Activated B cell treated with CpG ODN at 0.5 μM for 24 hours (primary cell): ENCODE measurements at regions of chr12 and their contacts with region 1.

Region 1: GRCh38 chr12:116244001-116244400 is 33.5 kb downstream of the MED13L start:
- DNase-seq: no peak
- ATAC-seq: peak; percentile 80
- H3K4me3 Mint-ChIP-seq: peak overlapping the region; percentile 47
- H3K27ac Mint-ChIP-seq: peak overlapping the region; percentile 78
- H3K4me1 Mint-ChIP-seq: peaks cover 79% of the 10 kb centered on the region
- H3K27me3 Mint-ChIP-seq: no peaks in the 10 kb centered on the region
- CTCF ChIP-seq: no peak

Region 2: DNA sequence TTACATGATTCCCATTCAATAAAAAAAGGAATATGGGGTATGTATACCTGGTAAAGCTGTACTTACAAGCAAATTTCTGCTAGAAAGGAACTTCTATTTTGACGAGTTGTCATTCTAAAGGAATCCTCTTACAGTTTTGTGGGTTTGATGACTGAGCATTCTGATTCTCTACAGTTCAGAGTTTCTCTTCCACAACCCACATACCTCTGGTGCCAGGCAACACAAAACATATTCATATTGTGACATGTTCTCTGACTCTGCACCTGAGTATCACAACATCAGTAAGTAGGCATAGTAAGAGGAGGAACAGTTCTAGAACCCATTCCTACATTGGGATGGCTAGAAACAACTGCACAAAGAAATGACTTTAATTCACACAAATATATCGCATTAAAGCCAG is 603.1 kb before region 1 on chr12:
- CTCF ChIA-PET with region 1: no interaction called
- POLR2A ChIA-PET with region 1: no interaction called
- intact Hi-C with region 1: no loop called
- DNase-seq: no peak
- ATAC-seq: no peak
- H3K4me3 Mint-ChIP-seq: no peak overlapping the region
- H3K27ac Mint-ChIP-seq: no peak overlapping the region
- H3K4me1 Mint-ChIP-seq: no peaks in the 10 kb centered on the region
- H3K27me3 Mint-ChIP-seq: no peaks in the 10 kb centered on the region
- CTCF ChIP-seq: no peak

Region 3: GRCh38 chr12:115885038-115885690 is 358.8 kb before region 1 on chr12:
- CTCF ChIA-PET with region 1: no interaction called
- POLR2A ChIA-PET with region 1: no interaction called
- intact Hi-C with region 1: no loop called
- DNase-seq: no peak
- ATAC-seq: no peak
- H3K4me3 Mint-ChIP-seq: no peak overlapping the region
- H3K27ac Mint-ChIP-seq: no peak overlapping the region
- H3K4me1 Mint-ChIP-seq: no peaks in the 10 kb centered on the region
- H3K27me3 Mint-ChIP-seq: peaks cover 29% of the 10 kb centered on the region
- CTCF ChIP-seq: no peak

Region 4: DNA sequence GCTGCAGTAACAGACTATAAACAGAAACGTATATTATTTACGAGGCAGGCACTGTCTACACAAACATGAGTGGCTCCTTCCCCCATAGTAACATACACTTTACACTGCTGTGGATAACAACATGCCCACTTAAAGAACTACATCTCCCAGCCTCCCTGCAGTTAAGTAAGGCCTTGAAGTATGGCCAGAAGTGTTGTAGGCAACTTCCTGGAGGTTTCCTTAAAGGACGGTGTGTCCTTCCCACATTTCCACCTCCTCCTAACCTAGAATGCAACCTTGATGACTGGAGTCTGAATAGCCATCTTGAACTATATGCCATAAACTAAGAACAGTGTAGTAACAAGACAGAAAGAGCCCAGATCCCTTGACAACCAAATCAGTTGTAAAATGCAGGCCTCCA is 13.2 kb after region 1 on chr12:
- CTCF ChIA-PET with region 1: no interaction called
- POLR2A ChIA-PET with region 1: interaction called, 15 read pairs
- intact Hi-C with region 1: loop called (anchors 1 kb)
- DNase-seq: no peak
- ATAC-seq: no peak
- H3K4me3 Mint-ChIP-seq: no peak overlapping the region
- H3K27ac Mint-ChIP-seq: no peak overlapping the region
- H3K4me1 Mint-ChIP-seq: peaks cover 81% of the 10 kb centered on the region
- H3K27me3 Mint-ChIP-seq: no peaks in the 10 kb centered on the region
- CTCF ChIP-seq: no peak

Region 5: DNA sequence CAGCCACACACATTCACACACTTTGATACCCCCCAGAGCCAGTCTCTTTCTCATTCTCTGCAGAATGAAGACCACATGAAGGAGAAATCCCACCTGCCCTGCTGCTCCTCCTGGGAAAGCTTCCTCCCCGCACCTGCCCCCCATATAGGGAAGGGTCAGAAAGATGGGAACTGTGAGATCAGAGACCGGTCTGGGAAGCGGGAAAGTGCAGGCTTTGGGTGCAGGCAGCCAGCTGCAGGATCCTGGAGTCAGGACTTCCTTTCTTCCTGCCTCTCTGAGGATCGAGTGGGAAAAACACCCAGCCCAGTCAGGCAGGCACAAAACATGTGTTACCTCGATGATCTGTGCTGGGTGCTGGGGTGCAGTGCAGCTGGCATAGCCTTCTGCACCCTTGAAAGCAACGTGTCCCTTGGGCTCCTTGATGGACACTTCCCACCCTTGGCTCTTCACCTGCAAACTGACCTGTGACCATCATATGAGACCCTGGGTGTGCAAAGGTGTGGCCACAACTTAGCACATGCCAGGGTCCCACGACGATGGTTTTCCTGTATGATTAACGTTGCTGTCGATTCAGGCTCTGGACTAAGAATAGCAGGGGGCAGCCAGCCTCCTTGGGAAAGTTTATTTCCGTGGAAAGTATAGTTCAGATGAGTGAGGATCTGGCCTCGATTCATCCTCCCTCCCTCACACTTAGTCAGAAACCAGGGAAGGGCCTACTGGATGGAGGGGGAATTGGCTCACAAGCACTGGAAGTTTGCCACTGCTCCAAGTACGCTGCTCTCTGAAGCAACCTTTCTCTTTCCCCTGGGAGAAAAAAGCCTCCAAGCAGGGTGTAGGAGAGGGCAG is 138.9 kb after region 1 on chr12:
- CTCF ChIA-PET with region 1: no interaction called
- POLR2A ChIA-PET with region 1: no interaction called
- intact Hi-C with region 1: no loop called
- DNase-seq: no peak
- ATAC-seq: no peak
- H3K4me3 Mint-ChIP-seq: no peak overlapping the region
- H3K27ac Mint-ChIP-seq: no peak overlapping the region
- H3K4me1 Mint-ChIP-seq: peaks cover 11% of the 10 kb centered on the region
- H3K27me3 Mint-ChIP-seq: peaks cover 2% of the 10 kb centered on the region
- CTCF ChIP-seq: no peak